Sciatic nerve (tissue), 2 donors: ENCODE measurements at regions of chr14 and their contacts with region 1.

Region 1: DNA sequence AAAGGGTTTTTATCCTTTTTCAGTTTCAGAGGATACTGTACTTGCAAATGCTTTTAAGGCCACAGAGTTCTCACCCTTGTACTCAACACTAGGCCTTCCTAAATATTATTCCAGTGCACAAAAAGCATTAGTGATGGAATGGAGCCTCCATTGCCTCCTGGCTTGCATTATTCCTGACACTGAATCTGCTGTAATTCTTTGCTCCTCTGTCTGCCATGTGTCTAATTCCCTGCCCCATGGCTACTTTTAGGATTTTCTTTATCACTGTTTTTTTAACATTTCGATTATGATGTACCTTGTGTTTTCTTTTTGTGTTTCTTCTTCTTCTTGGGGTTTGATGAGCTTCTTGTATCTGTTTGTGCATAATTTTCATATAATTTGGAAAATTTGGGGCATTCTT is 29.5 kb downstream of the SUSD6 start:
- DNase-seq: no peak
- ATAC-seq: no peak

Region 2: DNA sequence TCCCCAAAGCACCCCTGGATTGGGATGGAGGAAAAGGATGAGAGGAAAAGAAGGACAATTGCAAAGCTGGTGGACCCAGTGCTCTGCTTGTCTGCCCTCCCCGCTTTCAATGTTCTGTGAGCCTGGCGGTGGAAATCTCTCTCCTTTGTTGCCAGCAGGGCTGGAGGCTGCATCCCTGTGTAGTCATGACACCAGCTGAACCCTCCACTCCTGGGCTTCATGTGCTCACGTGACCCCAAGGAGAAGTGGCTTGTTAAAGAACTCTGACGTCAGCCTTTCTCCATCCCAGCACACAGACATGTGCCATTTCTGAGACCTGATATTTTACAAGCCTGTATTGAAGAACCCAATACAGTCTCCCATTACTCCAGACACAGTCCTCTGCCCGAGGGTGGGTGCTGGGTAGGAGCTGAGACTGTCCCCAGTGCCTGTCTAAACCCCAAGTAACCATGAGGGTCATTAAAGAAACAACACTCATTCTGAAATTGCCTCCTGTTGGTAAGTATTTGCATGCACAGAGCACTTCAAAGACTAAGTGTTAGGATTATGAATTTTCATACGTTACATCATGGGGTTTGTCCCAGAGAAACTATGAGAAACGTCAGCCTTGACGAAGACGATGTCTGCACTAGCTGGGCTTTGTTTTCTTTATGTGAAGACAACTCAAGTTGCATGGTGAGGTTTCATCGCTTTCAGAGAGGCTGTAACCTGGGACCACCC is 359.3 kb before region 1 on chr14:
- intact Hi-C with region 1: no loop called
- DNase-seq: no peak
- ATAC-seq: no peak

Region 3: GRCh38 chr14:69543341-69544249 is 97.3 kb before region 1 on chr14:
- intact Hi-C with region 1: no loop called
- DNase-seq: no peak
- ATAC-seq: no peak

Region 4: GRCh38 chr14:69593018-69593677 is 47.8 kb before region 1 on chr14:
- intact Hi-C with region 1: loop called (anchors 2 kb)
- DNase-seq: peak; percentile 78
- ATAC-seq: peak; percentile 92